B cell (primary cell): ENCODE measurements at regions of chr10 and their contacts with region 1.

Region 1: GRCh38 chr10:80504158-80504811 is 33.4 kb upstream of the SH2D4B start:
- DNase-seq: peak; percentile 39
- ATAC-seq: peak; percentile 31
- H3K4me3 ChIP-seq: no peak overlapping the region
- H3K4me3 Mint-ChIP-seq: peak overlapping the region; percentile 34
- H3K27ac ChIP-seq: peak overlapping the region; percentile 5 to 19
- H3K27ac Mint-ChIP-seq: peak overlapping the region; percentile 85
- H3K4me1 ChIP-seq: peaks cover 54 to 66% of the 10 kb centered on the region in 2 donors
- H3K4me1 Mint-ChIP-seq: peaks cover 59% of the 10 kb centered on the region
- H3K27me3 ChIP-seq: no peaks in the 10 kb centered on the region
- H3K27me3 Mint-ChIP-seq: no peaks in the 10 kb centered on the region
- CTCF ChIP-seq: no peak

Region 2: GRCh38 chr10:80382989-80383388 is 121.3 kb before region 1 on chr10:
- CTCF ChIA-PET with region 1: interaction called, 273 read pairs
- POLR2A ChIA-PET with region 1: no interaction called
- intact Hi-C with region 1: loop called (anchors 1 kb)
- DNase-seq: peak; percentile 60
- ATAC-seq: peak; percentile 54
- H3K4me3 ChIP-seq: no peak overlapping the region
- H3K4me3 Mint-ChIP-seq: no peak overlapping the region
- H3K27ac ChIP-seq: no peak overlapping the region
- H3K27ac Mint-ChIP-seq: no peak overlapping the region
- H3K4me1 ChIP-seq: peaks cover 4 to 6% of the 10 kb centered on the region in 2 donors
- H3K4me1 Mint-ChIP-seq: peaks cover 8% of the 10 kb centered on the region
- H3K27me3 ChIP-seq: peaks cover 0 to 3% (median 1%) of the 10 kb centered on the region in 4 experiments
- H3K27me3 Mint-ChIP-seq: peaks cover 5% of the 10 kb centered on the region
- CTCF ChIP-seq: peak; percentile 79

Region 3: DNA sequence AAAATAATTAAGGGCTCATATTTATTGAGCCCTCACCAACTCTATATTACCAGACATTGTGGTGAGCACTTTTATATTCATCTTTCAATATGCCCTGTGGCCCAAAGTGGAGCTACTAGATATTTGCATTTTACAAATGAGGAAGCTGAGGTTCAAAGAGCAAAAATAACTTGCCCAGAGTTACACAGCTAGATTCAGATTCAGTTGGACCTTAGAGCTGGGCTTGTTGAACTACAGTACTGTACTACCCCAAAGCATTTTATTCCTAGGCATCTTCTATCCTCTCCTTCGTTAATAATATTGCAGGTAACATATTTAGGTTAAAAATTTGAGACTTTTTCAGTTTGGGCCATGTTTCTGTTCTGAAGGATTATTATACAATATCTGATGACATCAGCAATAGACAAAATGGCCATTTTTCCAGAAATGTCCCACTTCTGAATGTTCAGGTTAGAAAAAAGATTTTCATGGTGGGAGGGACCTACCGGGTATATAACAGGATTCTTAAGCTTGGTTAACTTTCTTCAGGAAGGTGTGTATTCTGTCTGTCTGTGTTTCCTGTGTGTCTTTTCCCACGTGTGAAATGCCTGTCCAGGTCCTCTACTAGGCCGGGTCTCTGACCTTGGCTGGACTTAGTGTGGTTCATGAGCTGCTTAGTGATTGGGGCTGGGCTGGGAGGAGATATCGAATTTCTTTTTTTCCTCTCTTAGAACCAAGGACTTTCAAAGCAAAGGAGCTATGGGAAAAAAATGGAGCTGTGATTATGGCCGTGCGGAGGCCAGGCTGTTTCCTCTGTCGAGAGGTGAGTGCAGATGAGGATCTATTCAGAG is 82.4 kb before region 1 on chr10:
- CTCF ChIA-PET with region 1: interaction called, 46 read pairs
- POLR2A ChIA-PET with region 1: interaction called, 6 read pairs
- intact Hi-C with region 1: no loop called
- DNase-seq: peak; percentile 50
- ATAC-seq: peak; percentile 78
- H3K4me3 ChIP-seq: peak overlapping the region in 1 of 5 experiments; percentile 29
- H3K4me3 Mint-ChIP-seq: peak overlapping the region; percentile 15
- H3K27ac ChIP-seq: no peak overlapping the region
- H3K27ac Mint-ChIP-seq: peak overlapping the region; percentile 53
- H3K4me1 ChIP-seq: peaks cover 24 to 31% of the 10 kb centered on the region in 2 donors
- H3K4me1 Mint-ChIP-seq: peaks cover 30% of the 10 kb centered on the region
- H3K27me3 ChIP-seq: no peaks in the 10 kb centered on the region
- H3K27me3 Mint-ChIP-seq: no peaks in the 10 kb centered on the region
- CTCF ChIP-seq: no peak

Region 4: GRCh38 chr10:80437231-80437630 is 67.1 kb before region 1 on chr10:
- CTCF ChIA-PET with region 1: interaction called, 500 read pairs
- POLR2A ChIA-PET with region 1: no interaction called
- intact Hi-C with region 1: no loop called
- DNase-seq: no peak
- ATAC-seq: no peak
- H3K4me3 ChIP-seq: no peak overlapping the region
- H3K4me3 Mint-ChIP-seq: no peak overlapping the region
- H3K27ac ChIP-seq: no peak overlapping the region
- H3K27ac Mint-ChIP-seq: no peak overlapping the region
- H3K4me1 ChIP-seq: no peaks in the 10 kb centered on the region
- H3K4me1 Mint-ChIP-seq: no peaks in the 10 kb centered on the region
- H3K27me3 ChIP-seq: no peaks in the 10 kb centered on the region
- H3K27me3 Mint-ChIP-seq: peaks cover 5% of the 10 kb centered on the region
- CTCF ChIP-seq: no peak

Region 5: DNA sequence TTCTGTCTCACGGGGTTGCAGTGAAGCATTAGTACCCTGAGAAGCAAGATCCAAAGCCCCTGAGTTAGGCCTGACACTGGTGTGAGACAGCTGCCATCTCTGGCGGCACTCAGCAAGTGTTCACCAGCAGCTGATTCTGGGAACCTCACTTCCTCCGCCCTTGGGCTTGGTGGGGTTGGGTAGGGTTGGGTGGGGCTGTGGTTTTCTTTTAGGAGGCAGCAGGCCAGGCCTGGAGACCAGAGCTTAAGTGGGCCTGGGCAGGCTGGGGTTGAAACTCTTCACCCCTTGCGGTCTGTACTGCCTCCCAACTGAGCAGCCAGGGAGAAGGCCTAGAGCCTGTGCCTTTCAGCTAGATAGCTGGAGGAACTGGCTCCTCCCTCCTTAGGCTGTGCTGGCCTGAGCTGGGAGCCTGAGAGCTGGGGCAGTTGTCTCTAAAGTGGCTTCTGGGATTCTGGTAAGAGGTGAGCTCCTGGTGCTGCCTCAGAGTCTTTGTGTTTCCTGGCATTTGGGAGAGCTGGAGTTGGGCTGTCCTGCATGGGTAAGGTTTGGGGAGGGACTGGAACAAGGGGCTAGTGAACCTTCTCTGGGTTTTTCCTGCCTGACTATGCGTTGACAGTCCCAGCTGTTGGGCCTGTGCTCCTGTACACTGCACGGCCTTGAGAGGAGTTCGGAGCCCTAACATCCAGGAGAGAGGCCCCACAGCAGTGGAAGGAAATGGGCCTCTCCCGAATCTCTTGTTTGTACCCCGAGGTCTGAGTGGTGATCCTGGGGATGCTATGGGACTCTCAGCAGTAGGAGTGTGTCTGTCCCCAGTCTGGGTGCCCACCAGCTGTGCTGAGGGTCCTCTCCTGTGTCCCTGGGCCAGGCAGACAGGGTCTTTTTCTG is 45.0 kb before region 1 on chr10:
- CTCF ChIA-PET with region 1: interaction called, 41 read pairs
- POLR2A ChIA-PET with region 1: interaction called, 5 read pairs
- intact Hi-C with region 1: loop called (anchors 1 kb)
- DNase-seq: peak; percentile 66
- ATAC-seq: peak; percentile 11
- H3K4me3 ChIP-seq: peak overlapping the region in 3 of 5 experiments; percentile 8 to 34 (median 12)
- H3K4me3 Mint-ChIP-seq: peak overlapping the region; percentile 68
- H3K27ac ChIP-seq: peak overlapping the region; percentile 48 to 58
- H3K27ac Mint-ChIP-seq: peak overlapping the region; percentile 90
- H3K4me1 ChIP-seq: peaks cover 85 to 94% of the 10 kb centered on the region in 2 donors
- H3K4me1 Mint-ChIP-seq: peaks cover 89% of the 10 kb centered on the region
- H3K27me3 ChIP-seq: no peaks in the 10 kb centered on the region
- H3K27me3 Mint-ChIP-seq: no peaks in the 10 kb centered on the region
- CTCF ChIP-seq: no peak

Region 6: DNA sequence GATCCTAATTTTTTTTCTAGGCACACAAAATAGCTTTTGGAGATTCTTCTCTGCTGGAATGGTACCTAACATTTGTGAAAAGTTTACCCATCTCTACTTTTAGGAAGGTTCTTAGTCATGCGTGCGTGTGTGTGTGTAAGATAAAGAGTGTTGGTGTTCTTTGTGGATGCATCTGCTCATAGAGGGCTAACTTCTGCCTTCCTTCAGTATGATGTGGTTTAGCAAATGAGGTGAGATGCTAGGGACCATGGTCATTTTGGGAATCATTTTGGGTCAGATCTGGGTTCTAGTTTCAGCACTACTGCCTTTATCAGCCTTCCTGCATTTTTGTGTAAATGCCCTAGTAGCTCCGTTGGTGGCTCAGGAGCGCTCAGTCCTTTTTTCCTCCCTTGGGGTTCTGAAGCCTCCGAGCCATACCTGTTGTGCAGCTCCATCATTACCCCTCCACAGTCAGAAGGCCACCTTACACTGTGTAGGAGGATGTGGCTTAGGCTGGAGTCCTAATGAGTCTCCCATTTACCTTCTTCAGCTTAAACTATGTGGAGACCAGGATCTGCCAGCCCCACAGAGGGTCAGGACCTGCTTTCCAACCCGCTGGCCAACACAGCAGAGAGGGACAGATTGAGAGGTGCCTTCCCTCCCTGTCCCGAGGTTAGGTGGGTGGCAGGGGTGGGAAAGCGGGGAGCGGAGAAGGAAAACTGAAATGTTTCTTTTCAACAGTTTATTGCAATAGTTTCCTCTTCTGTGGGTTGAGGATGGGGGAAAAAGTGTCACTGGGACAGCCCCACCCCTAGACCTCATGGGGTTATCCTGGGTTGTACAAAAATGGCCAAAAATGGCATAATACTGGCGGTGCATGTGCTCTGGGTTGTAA is 19.0 kb before region 1 on chr10:
- CTCF ChIA-PET with region 1: interaction called, 71 read pairs
- POLR2A ChIA-PET with region 1: no interaction called
- intact Hi-C with region 1: no loop called
- DNase-seq: no peak
- ATAC-seq: no peak
- H3K4me3 ChIP-seq: no peak overlapping the region
- H3K4me3 Mint-ChIP-seq: no peak overlapping the region
- H3K27ac ChIP-seq: no peak overlapping the region
- H3K27ac Mint-ChIP-seq: no peak overlapping the region
- H3K4me1 ChIP-seq: peaks cover 8 to 28% of the 10 kb centered on the region in 2 donors
- H3K4me1 Mint-ChIP-seq: peaks cover 52% of the 10 kb centered on the region
- H3K27me3 ChIP-seq: no peaks in the 10 kb centered on the region
- H3K27me3 Mint-ChIP-seq: no peaks in the 10 kb centered on the region
- CTCF ChIP-seq: no peak